ENCODE measurements at regions of chr10 and their contacts with region 1.

Region 1: DNA sequence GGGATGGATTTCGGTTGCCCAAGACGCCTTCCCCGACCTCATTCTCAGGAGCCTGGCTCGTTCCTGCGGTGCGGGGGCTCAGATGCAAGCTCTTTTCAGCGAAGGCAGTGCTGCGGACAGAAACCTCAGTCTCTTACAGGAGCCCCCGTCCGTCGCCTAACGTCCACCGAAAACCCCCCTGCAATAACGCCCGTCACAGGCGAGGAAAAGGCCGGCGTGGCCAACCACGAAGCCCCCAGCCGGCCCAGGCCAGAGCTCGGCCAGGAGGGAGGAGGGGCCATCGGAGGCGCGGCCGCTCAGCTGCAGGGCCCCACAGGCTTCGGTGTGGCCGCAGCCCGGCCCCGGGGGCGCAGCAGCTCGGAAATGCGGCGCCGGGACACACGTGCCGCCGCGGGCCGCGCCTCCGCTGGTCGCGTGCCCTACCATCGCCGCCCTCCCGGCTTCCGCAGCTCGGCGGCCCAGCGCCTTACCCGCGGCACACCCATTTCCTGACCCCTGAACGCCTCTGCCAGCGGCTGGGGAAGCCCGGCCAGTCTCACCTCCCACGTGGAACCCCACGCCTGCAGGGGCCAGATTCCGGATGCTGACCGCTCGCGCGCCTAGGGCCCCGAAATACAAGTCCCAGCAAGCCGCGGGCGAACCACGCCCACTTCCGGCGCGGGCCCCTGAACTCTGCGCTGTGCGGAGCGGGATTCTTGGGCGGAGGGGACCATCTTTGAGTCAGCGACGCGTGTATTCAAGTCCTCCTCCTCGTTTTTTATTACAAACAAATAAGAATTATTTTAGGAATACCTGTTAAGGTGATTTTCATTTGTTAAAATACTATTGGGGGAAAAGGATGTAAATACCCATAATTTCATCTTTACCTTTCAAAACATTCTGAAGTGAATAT is at the start of gene ZNF239:
- DNase-seq: peak; percentile 90
- H3K4me3 Mint-ChIP-seq: peak within 1 kb of the TSS; percentile 70
- H3K27ac Mint-ChIP-seq: peak within 1 kb of the TSS; percentile 65
- H3K4me1 Mint-ChIP-seq: peaks cover 50% of the 10 kb centered on the region
- H3K27me3 Mint-ChIP-seq: no peaks in the 10 kb centered on the region
- total RNA-seq, gene ZNF239: 1.5 to 1.7 TPM

Region 2: GRCh38 chr10:43128958-43129706 is 445.1 kb before region 1 on chr10:
- CTCF ChIA-PET with region 1: no interaction called
- POLR2A ChIA-PET with region 1: no interaction called
- intact Hi-C with region 1: loop called (anchors 10 kb)
- DNase-seq: peak; percentile 70
- H3K4me3 Mint-ChIP-seq: no peak overlapping the region
- H3K27ac Mint-ChIP-seq: peak overlapping the region; percentile 76
- H3K4me1 Mint-ChIP-seq: peaks cover 25% of the 10 kb centered on the region
- H3K27me3 Mint-ChIP-seq: no peaks in the 10 kb centered on the region

Region 3: GRCh38 chr10:43407576-43408330 is 166.5 kb before region 1 on chr10:
- CTCF ChIA-PET with region 1: no interaction called
- POLR2A ChIA-PET with region 1: no interaction called
- intact Hi-C with region 1: loop called (anchors 10 kb)
- DNase-seq: peak; percentile 95
- H3K4me3 Mint-ChIP-seq: peak overlapping the region; percentile 97
- H3K27ac Mint-ChIP-seq: peak overlapping the region; percentile 100
- H3K4me1 Mint-ChIP-seq: peaks cover 20% of the 10 kb centered on the region
- H3K27me3 Mint-ChIP-seq: no peaks in the 10 kb centered on the region

Region 4: GRCh38 chr10:43436400-43437140 is 137.7 kb before region 1 on chr10 and contains the start of gene ZNF487:
- CTCF ChIA-PET with region 1: no interaction called
- POLR2A ChIA-PET with region 1: no interaction called
- intact Hi-C with region 1: no loop called
- DNase-seq: peak; percentile 94
- H3K4me3 Mint-ChIP-seq: peak within 1 kb of the TSS; percentile 83
- H3K27ac Mint-ChIP-seq: peak within 1 kb of the TSS; percentile 92
- H3K4me1 Mint-ChIP-seq: peaks cover 14% of the 10 kb centered on the region
- H3K27me3 Mint-ChIP-seq: no peaks in the 10 kb centered on the region
- total RNA-seq, gene ZNF487: 2.2 to 2.6 TPM

Region 5: DNA sequence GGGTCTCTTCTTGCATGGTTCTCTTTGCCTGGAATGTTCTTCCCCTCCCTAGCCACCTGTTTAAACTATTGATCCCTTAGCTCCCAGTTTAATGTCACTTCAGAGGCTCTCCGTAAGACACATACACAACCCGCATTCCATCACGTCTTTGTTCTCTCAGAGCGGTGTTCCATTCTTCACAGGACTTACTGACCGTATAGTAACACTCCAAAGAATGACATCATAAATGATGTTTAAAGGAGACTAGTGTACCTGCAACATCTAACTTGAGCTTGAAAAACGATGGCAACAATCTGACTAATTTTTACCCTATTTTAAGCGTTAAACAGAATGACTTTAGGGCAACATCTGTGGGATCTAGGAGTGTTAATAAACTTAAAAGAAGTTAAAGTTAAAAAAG is 10.2 kb before region 1 on chr10:
- CTCF ChIA-PET with region 1: no interaction called
- POLR2A ChIA-PET with region 1: no interaction called
- intact Hi-C with region 1: no loop called
- DNase-seq: no peak
- H3K4me3 Mint-ChIP-seq: no peak overlapping the region
- H3K27ac Mint-ChIP-seq: no peak overlapping the region
- H3K4me1 Mint-ChIP-seq: no peaks in the 10 kb centered on the region
- H3K27me3 Mint-ChIP-seq: no peaks in the 10 kb centered on the region

Region 6: DNA sequence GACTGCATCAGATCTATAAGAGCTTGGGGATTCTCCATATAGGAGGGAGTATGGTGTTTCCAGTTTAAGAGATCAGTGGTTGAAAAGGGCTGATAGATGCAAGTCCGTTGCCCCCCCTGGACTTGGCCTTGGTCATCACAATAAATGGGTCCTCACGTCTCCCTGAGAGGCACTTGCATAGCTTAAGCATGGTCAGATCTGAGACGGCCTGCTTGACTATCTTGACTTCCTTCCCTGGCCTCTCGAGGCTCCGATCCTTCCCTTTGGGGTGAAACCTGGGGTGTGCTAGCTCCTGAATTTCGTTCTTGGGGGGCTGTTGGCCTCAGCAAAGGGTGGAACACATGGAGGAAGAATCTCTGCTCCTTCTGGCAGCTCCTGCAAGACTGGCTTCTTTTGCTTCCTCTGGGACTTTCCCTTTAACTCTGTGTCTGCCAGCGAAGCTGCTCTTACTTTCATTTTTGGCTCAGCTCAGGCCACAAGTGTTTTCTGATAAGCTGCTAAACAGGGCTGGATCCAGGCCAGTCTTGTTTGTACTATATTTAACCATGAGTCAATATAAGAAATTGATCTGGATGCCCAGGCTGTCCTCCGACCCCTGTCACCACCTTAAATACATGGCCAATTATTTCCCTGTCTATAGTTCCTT is 20.8 kb after region 1 on chr10:
- CTCF ChIA-PET with region 1: no interaction called
- POLR2A ChIA-PET with region 1: no interaction called
- intact Hi-C with region 1: loop called (anchors 1 kb)
- DNase-seq: peak; percentile 68
- H3K4me3 Mint-ChIP-seq: peak overlapping the region; percentile 38
- H3K27ac Mint-ChIP-seq: no peak overlapping the region
- H3K4me1 Mint-ChIP-seq: peaks cover 23% of the 10 kb centered on the region
- H3K27me3 Mint-ChIP-seq: peaks cover 7% of the 10 kb centered on the region

Region 7: DNA sequence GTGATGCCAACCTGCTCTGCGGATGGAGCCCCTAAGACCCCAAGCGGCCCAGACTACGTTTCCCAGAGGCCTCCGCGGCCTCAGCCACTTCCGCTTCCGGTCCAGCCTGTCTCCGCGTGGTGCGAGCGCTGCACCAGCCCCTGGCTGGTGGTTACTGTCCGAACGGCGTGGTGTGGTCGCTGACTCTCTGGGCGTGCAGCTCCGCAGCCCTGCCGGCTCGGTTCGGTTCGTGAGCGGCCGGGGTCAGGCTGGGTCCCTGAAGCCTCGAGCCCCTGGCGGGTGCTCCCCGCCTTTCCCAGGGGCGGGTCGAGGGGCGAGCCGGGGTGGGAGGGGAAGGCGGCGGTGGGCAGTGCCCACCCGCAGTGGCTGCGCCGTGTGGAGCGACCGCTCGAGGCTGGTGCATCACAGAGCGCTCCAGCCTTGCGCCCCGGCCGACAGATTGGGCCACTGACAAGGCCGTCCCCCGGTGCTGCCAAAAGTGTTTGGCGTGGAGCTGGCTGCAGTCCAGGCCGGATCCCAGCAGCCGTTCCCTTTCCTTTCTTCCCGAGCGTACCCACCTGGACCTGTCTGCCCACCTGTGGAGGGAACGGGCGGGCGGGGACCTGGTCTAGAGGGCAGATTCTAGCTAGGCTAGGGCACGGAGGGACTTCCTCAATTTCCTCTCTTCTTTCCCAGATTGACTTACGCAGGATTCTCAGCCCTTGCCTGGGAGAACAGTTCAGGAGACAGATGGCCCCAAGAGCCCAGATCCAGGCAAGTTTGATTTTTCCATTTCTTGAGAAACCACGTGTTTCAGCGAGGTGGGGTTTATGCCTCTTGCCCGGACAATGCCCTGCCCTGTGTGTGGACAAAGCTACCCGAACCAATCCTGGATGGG is 32.3 kb after region 1 on chr10 and contains the start of gene ZNF485:
- CTCF ChIA-PET with region 1: no interaction called
- POLR2A ChIA-PET with region 1: interaction called, 3 read pairs
- intact Hi-C with region 1: loop called (anchors 1 kb)
- DNase-seq: peak; percentile 73
- H3K4me3 Mint-ChIP-seq: peak within 1 kb of the TSS; percentile 79
- H3K27ac Mint-ChIP-seq: peak within 1 kb of the TSS; percentile 69
- H3K4me1 Mint-ChIP-seq: peaks cover 32% of the 10 kb centered on the region
- H3K27me3 Mint-ChIP-seq: no peaks in the 10 kb centered on the region
- total RNA-seq, gene ZNF485: 4.1 to 4.7 TPM

Region 8: GRCh38 chr10:43648398-43649184 is 74.3 kb after region 1 on chr10 and contains the start of gene ZNF32:
- CTCF ChIA-PET with region 1: no interaction called
- POLR2A ChIA-PET with region 1: no interaction called
- intact Hi-C with region 1: loop called (anchors 1 kb)
- DNase-seq: peak; percentile 87
- H3K4me3 Mint-ChIP-seq: peak within 1 kb of the TSS; percentile 84
- H3K27ac Mint-ChIP-seq: peak within 1 kb of the TSS; percentile 87
- H3K4me1 Mint-ChIP-seq: peaks cover 15% of the 10 kb centered on the region
- H3K27me3 Mint-ChIP-seq: peaks cover 3% of the 10 kb centered on the region
- total RNA-seq, gene ZNF32: 12.2 to 13.5 TPM